ENCODE measurements at regions of chr1 and their contacts with region 1.

Region 1: GRCh38 chr1:91511386-91511785 is 10.7 kb downstream of the CDC7 start:
- DNase-seq: peak; percentile 9 to 51
- ATAC-seq: peak in 1 of 2 experiments; percentile 59; a peak in 3 of 6 replicates
- H3K4me3 ChIP-seq: no peak overlapping the region
- H3K27ac ChIP-seq: no peak overlapping the region
- H3K4me1 ChIP-seq: no peaks in the 10 kb centered on the region
- CTCF ChIP-seq: peak; percentile 68
- EP300 ChIP-seq: no peak
- POLR2A ChIP-seq: no peak
- RAD21 ChIP-seq: peak; percentile 72 to 75

Region 2: DNA sequence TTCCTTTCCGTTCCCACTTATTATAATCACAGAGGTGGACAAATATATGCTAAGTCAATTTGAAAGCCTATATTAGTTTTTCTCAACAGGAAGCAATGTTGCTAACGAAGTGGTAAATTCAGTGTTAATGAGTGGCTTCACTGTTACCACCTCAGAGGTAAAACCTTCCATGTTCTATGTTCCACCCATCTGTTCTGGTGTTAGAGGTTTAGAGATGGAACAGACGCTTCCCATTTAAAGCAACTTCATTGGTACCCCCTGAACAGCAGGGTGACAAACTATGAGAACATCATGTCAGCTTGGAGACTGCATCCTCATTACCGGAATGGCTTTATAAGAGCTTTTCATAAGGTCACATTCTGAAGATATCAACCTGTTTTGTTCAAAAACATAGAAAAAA is 567.4 kb before region 1 on chr1:
- CTCF ChIA-PET with region 1: no interaction called
- POLR2A ChIA-PET with region 1: no interaction called
- DNase-seq: no peak
- ATAC-seq: no peak
- H3K4me3 ChIP-seq: no peak overlapping the region
- H3K27ac ChIP-seq: no peak overlapping the region
- H3K4me1 ChIP-seq: no peaks in the 10 kb centered on the region
- CTCF ChIP-seq: no peak
- EP300 ChIP-seq: no peak
- POLR2A ChIP-seq: no peak
- RAD21 ChIP-seq: no peak

Region 3: DNA sequence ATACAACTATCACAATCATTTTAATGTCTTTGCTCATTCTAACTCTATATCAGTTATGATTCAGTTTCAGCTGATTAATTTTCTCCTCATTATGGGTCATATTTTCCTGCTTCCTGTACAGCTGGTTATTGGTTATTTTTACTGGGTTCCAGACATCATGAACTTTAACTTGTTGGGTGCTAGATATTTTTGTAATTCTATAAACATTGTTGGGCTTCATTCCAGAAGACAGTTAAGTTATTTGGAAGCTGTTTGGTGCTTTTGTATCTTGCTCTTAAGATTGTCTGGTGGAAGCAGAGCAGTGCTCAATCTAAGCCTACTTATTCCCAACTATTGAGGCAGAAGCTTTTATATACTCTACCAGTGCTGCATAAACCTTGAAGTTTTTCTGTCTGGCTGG is 72.4 kb before region 1 on chr1:
- CTCF ChIA-PET with region 1: no interaction called
- POLR2A ChIA-PET with region 1: no interaction called
- DNase-seq: no peak
- ATAC-seq: no peak
- H3K4me3 ChIP-seq: no peak overlapping the region
- H3K27ac ChIP-seq: no peak overlapping the region
- H3K4me1 ChIP-seq: no peaks in the 10 kb centered on the region
- CTCF ChIP-seq: no peak
- EP300 ChIP-seq: no peak
- POLR2A ChIP-seq: no peak
- RAD21 ChIP-seq: no peak

Region 4: DNA sequence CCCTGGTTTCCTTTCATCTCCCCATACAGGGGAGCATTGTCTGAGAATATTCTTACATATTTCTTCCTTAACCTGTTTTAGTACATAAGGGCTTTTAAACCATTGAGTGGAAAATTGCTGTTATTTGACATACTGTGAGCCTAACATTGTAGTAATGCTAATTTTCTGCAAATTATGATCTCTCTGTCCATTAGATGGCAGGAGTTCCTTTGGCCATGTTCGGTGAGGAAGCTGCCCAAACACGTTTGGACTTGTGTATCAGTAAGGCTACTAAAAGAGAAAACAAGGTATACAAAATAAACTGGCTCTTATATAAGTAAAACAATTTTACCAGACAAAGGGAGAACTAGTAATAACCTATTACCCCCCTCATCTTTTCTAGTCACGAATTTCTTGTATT is 18.5 kb after region 1 on chr1:
- CTCF ChIA-PET with region 1: interaction called, 27 read pairs
- POLR2A ChIA-PET with region 1: no interaction called
- DNase-seq: peak in 1 of 2 experiments; percentile 44
- ATAC-seq: peak in 1 of 2 experiments; percentile 66; a peak in 3 of 6 replicates
- H3K4me3 ChIP-seq: no peak overlapping the region
- H3K27ac ChIP-seq: peak overlapping the region; percentile 59 to 80
- H3K4me1 ChIP-seq: 0 out of 3 replicates have a peak, but pooled peaks cover 6% of the 10 kb centered on the region
- CTCF ChIP-seq: peak; percentile 62
- EP300 ChIP-seq: no peak
- POLR2A ChIP-seq: no peak
- RAD21 ChIP-seq: peak; percentile 77

Region 5: GRCh38 chr1:91582431-91582921 is 71.1 kb after region 1 on chr1:
- CTCF ChIA-PET with region 1: no interaction called
- POLR2A ChIA-PET with region 1: no interaction called
- DNase-seq: peak; percentile 9 to 40
- ATAC-seq: peak; percentile 67 to 80
- H3K4me3 ChIP-seq: no peak overlapping the region
- H3K27ac ChIP-seq: peak overlapping the region in 1 of 2 experiments; percentile 45; a peak in 1 of 6 replicates
- H3K4me1 ChIP-seq: peaks cover 15% of the 10 kb centered on the region; the same call in 1 of the 3 replicates
- CTCF ChIP-seq: no peak
- EP300 ChIP-seq: no peak
- POLR2A ChIP-seq: no peak
- RAD21 ChIP-seq: no peak

Region 6: DNA sequence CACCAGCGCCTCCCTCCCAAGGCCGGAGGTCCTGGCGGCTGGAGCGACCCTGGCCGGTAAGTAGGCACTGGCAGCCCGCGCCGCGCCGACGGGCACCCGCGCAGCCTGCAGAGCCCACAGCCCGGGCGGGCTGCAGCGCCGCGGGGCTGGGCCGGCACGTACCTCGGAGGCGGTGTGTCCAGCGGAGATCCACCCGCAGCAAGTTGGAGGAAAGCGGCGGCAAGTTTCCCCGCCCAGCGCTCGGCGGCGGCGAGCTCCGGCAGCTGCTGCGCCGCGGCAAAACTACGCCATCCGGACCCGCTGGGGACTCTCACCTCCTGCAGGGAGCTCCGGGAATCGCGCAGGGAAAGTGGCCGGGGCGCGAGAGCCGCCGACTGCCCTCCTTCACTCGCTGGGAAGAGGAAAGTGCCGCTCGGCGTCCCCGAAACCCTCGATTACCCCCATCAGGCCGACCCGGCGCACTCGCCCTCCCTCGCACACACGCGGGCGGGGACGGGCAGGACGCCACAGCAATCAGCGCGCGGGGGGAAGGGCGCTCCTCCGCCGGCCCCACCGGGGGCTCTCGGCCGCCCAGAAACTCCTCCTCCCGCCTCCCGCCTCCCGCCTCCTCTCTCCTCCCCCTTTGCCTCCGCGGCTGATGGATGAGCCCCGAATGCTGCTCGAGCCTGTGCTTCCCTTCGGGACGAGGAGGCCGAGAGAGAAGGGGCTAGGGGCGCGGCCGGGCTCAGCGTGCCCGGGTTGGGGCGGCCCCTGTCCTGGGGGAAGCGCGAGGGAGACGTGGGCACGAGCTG is 374.5 kb after region 1 on chr1 and contains the start of gene TGFBR3:
- CTCF ChIA-PET with region 1: interaction called, 10 read pairs
- POLR2A ChIA-PET with region 1: no interaction called
- DNase-seq: peak; percentile 76 to 87
- ATAC-seq: peak; percentile 86 to 87
- H3K4me3 ChIP-seq: peak within 1 kb of the TSS; percentile 84
- H3K27ac ChIP-seq: peak within 1 kb of the TSS; percentile 77 to 92
- H3K4me1 ChIP-seq: peaks cover 39% of the 10 kb centered on the region
- CTCF ChIP-seq: no peak; the same call in 2 of the 3 replicates
- EP300 ChIP-seq: peak in 1 of 2 experiments; percentile 22; a peak in 1 of 5 replicates
- POLR2A ChIP-seq: peak; percentile 46; the same call in 1 of the 2 replicates
- RAD21 ChIP-seq: peak; percentile 5 to 45; a peak in 2 of 5 replicates
- polyA plus RNA-seq, gene TGFBR3: 8.9 and 12.1 TPM in 2 replicates

Region 7: DNA sequence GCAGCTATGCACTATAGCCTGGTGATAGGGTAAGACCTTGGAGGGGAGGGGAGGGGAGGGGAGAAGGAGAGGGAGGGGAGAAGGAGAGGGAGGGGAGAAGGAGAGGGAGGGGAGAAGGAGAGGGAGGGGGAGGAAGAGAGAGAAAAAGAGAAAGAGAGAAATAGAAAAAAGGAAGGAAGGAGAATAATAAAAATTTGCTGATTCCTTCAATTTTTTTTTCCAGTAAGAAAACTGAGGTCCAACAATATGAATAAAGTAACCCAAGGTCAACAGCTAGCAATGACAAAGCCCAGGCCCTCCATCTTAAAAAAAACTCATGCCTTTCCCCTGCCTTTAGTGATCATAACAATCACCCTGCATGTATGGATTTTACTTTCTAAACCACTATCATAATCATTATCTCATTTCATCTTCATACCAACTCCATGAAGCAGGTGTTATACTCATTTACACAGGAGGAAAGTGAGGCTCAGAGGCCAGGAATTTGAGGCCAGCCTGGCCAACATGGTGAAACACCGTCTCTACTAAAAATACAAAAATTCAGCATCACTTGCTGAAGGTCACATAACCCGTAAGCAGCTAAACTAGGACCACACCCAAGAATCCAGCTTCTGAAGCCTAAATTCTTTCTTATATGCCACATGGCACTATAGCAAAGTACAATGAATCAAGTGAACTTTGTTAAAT is 414.4 kb after region 1 on chr1:
- CTCF ChIA-PET with region 1: interaction called, 25 read pairs
- POLR2A ChIA-PET with region 1: no interaction called
- DNase-seq: no peak
- ATAC-seq: no peak
- H3K4me3 ChIP-seq: no peak overlapping the region
- H3K27ac ChIP-seq: peak overlapping the region in 1 of 2 experiments; percentile 58; a peak in 4 of 6 replicates
- H3K4me1 ChIP-seq: peaks cover 10% of the 10 kb centered on the region; the same call in 2 of the 3 replicates
- CTCF ChIP-seq: no peak
- EP300 ChIP-seq: no peak
- POLR2A ChIP-seq: no peak
- RAD21 ChIP-seq: no peak

Region 8: GRCh38 chr1:92291372-92291999 is 780.1 kb after region 1 on chr1:
- CTCF ChIA-PET with region 1: interaction called, 21 read pairs
- POLR2A ChIA-PET with region 1: no interaction called
- DNase-seq: peak; percentile 10 to 57
- ATAC-seq: peak; percentile 74 to 81; a peak in 5 of 6 replicates
- H3K4me3 ChIP-seq: no peak overlapping the region
- H3K27ac ChIP-seq: no peak overlapping the region
- H3K4me1 ChIP-seq: no peaks in the 10 kb centered on the region
- CTCF ChIP-seq: peak; percentile 65
- EP300 ChIP-seq: no peak
- POLR2A ChIP-seq: no peak
- RAD21 ChIP-seq: peak; percentile 61 to 69